GM10248 (cell line): ENCODE measurements at regions of chr15 and their contacts with region 1.

Region 1: GRCh38 chr15:78049691-78050440 is 27.6 kb downstream of the TBC1D2B start:
- DNase-seq: peak; percentile 71
- CTCF ChIP-seq: no peak

Region 2: GRCh38 chr15:77939851-77940250 is 110.0 kb before region 1 on chr15:
- CTCF ChIA-PET with region 1: no interaction called
- POLR2A ChIA-PET with region 1: no interaction called
- DNase-seq: no peak
- CTCF ChIP-seq: no peak

Region 3: DNA sequence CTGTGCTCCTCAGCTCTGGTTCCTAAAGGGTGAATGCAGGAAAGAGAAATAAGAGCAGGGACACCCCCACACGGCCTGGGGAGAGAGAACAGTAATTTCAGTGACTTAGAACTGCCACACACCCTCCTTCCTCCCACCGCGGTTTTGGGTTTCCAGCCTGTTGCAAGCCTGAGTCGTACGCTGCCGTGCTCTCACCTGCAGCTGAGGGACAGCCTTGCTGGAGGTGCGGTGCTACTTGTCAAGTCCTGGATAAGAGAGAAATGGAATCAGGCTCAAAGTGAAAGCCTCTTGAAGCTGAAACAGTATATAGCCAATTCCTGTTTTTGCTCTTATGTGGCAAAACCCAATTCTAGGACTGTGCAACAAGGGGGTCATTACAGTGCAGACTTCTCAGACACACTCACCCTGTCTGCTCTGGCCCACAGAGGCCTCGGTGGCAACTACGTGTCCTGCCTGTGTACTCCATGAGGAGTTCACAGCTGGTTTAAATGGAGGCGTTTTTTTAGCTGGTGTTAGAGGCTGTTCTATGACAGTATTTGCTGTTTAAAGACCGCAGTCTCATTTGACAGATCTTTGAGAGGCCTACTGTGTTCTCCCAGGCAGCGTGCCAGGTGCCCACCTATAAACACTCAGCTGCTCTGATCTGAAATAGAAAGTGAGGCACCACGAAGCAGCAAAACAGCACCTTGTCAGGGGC is 15.2 kb before region 1 on chr15:
- CTCF ChIA-PET with region 1: interaction called, 23 read pairs
- POLR2A ChIA-PET with region 1: no interaction called
- DNase-seq: peak; percentile 56
- CTCF ChIP-seq: no peak

Region 4: DNA sequence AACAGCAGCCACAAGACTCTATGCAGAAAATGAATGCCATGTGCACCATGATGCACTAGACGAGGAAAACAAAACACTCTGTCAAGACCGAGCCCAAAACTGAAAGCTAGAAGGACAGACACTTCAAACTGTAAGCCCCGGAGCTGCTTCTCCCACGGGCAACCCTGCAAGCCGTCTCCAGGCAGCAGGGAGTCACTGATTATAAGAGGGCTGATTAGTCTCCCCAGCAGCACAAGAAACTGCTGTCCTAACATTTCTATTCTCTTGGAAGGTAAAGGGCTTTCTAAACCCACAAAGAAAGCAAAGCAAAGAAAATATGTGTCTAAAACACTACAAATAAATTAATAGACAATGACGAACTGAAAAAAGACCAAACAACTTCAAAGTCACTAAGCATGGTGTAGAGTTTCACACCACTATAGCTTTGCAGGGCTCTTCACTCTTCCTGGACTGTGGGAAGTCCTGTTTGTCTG is 12.1 kb after region 1 on chr15:
- CTCF ChIA-PET with region 1: interaction called, 20 read pairs
- POLR2A ChIA-PET with region 1: no interaction called
- DNase-seq: peak; percentile 57
- CTCF ChIP-seq: no peak